ENCODE measurements at regions of chr15 and their contacts with region 1.

Region 1: DNA sequence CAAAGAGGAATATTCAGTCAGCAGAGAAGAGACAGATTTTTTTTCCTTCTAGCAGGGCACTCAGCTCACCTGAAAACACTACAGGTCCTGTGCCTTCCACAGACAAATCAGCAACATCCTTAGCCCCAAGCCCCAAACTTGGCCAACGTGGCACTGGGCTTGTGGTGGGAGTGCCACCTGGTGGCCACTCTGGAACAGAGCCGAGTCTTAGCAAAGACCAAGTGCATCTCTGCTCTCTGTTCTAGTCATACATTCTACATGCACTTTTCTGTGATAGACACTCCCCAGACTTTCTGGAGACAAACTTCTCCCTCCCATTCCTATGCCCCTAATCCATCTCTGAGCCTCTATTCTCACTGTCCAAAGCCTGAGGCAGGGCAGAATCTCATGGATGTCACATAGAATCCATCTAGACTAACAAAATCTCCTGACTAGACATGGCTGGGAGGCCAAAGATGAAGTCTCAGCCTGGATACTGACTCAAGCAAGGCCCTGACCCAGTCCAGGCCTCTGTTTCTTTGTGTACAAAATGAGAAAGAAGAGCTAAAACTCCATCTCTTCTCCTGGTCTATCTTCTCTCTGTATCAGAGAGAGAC is 5.1 kb upstream of the SEMA7A start:
- DNase-seq: peak; percentile 54
- ATAC-seq: peak; percentile 85
- H3K4me3 ChIP-seq: no peak overlapping the region
- H3K27ac ChIP-seq: no peak overlapping the region
- H3K4me1 ChIP-seq: peaks cover 8% of the 10 kb centered on the region
- H3K27me3 ChIP-seq: no peaks in the 10 kb centered on the region
- CTCF ChIP-seq: peak; percentile 95

Region 2: GRCh38 chr15:74373731-74374647 is 64.8 kb before region 1 on chr15:
- CTCF ChIA-PET with region 1: interaction called, 9 read pairs
- POLR2A ChIA-PET with region 1: no interaction called
- in situ Hi-C with region 1: no loop called
- intact Hi-C with region 1: loop called (anchors 2 kb)
- DNase-seq: no peak
- ATAC-seq: peak; percentile 95
- H3K4me3 ChIP-seq: peak overlapping the region; percentile 62 to 67
- H3K27ac ChIP-seq: peak overlapping the region; percentile 60; the same call in 1 of the 2 replicates
- H3K4me1 ChIP-seq: peaks cover 9% of the 10 kb centered on the region
- H3K27me3 ChIP-seq: no peaks in the 10 kb centered on the region; the same call in 1 of the 2 replicates
- CTCF ChIP-seq: peak; percentile 92

Region 3: DNA sequence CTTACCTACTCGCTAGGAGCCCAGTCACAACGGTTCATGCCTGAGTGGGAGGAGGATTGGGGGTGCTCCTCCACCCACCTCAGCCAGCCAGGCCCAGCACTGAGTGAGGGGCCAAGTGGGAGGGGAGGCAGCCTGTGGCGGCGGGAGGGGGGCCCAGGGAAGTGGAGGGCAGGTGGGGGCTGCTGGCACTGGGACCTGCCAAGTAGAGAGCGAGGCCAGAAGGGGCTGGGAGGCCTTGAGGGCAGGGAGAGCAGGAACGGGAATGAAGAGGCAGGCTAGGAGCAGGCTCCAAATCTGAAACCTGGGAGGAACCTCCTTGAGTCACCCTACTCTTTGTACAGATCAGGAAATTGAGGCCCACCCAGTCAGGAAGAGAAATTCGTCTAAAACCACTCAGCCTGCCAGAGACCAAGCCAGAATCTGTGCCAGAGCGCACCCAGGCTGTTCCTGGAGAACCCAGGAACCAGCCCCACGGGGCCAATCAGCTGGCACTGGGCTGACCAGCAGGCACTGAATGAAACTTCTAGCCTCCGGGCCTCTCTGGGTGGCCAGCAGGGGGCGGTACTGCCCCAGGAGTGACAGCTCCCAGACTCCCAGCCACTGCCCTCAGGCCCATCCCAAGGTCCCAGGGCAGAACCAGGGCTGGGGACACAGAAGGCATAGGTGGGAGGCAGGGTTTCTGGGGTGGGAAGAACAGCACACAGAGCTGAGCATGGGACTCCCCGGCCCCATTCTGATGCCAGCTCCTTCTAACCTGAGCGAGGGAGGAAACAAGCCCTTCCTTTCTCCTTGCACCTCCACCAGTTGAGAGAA is 56.6 kb before region 1 on chr15:
- CTCF ChIA-PET with region 1: interaction called, 8 read pairs
- POLR2A ChIA-PET with region 1: interaction called, 4 read pairs
- in situ Hi-C with region 1: no loop called
- intact Hi-C with region 1: loop called (anchors 1 kb)
- DNase-seq: no peak
- ATAC-seq: peak; percentile 95
- H3K4me3 ChIP-seq: no peak overlapping the region
- H3K27ac ChIP-seq: peak overlapping the region; percentile 12; the same call in 1 of the 2 replicates
- H3K4me1 ChIP-seq: peaks cover 32% of the 10 kb centered on the region
- H3K27me3 ChIP-seq: no peaks in the 10 kb centered on the region
- CTCF ChIP-seq: peak; percentile 95

Region 4: DNA sequence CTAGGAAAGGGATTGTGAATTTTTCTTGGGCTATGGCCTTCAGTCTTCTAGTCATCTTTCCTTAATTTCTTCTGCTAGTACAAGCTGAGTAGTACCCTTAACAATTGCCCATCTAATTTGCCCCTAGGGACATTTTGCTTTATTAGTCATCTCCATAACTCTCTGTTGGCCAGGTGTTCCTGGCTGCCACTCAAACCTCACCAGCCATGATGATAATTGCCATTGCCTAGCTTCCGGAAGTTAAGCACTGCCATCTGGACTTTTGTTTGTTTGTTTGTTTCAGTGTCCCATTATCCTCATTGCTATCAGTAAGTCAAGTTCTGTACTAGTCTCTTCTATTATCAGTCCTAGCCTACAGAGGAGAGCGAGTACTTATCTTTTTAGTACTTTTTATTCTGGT is 58.8 kb after region 1 on chr15:
- CTCF ChIA-PET with region 1: no interaction called
- POLR2A ChIA-PET with region 1: interaction called, 10 read pairs
- in situ Hi-C with region 1: no loop called
- intact Hi-C with region 1: no loop called
- DNase-seq: no peak
- ATAC-seq: peak; percentile 74
- H3K4me3 ChIP-seq: no peak overlapping the region
- H3K27ac ChIP-seq: no peak overlapping the region
- H3K4me1 ChIP-seq: no peaks in the 10 kb centered on the region
- H3K27me3 ChIP-seq: no peaks in the 10 kb centered on the region
- CTCF ChIP-seq: no peak

Region 5: DNA sequence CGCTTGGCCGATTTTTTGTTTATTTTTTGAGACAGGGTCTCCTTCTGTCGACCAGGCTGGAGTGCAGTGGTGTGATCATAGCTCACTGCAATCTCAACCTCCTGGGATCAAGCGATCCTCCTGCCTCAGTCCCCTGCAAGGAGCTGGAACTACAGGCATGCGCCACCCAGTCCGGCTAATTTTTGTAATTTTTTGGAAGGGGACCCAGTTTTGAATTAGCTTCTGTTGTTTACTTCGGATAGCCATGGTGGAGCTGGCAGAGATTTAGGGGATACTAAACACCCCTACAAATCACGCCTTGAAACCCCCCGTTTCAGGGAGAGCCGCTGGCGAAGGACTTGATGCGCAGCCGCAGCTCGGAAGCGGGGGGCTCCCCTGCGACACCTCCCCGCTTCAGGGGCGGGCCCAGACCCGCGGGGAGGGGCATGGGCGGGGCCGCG is 175.5 kb after region 1 on chr15:
- CTCF ChIA-PET with region 1: no interaction called
- POLR2A ChIA-PET with region 1: no interaction called
- in situ Hi-C with region 1: no loop called
- intact Hi-C with region 1: no loop called
- DNase-seq: no peak
- ATAC-seq: no peak
- H3K4me3 ChIP-seq: peak overlapping the region; percentile 90 to 100
- H3K27ac ChIP-seq: peak overlapping the region; percentile 65
- H3K4me1 ChIP-seq: peaks cover 11% of the 10 kb centered on the region
- H3K27me3 ChIP-seq: no peaks in the 10 kb centered on the region
- CTCF ChIP-seq: no peak

Region 6: GRCh38 chr15:74873036-74873755 is 434.4 kb after region 1 on chr15 and contains the start of gene SCAMP2:
- CTCF ChIA-PET with region 1: interaction called, 10 read pairs
- POLR2A ChIA-PET with region 1: no interaction called
- in situ Hi-C with region 1: no loop called
- intact Hi-C with region 1: no loop called
- DNase-seq: peak; percentile 81
- ATAC-seq: peak; percentile 99
- H3K4me3 ChIP-seq: peak within 1 kb of the TSS; percentile 85 to 98
- H3K27ac ChIP-seq: peak within 1 kb of the TSS; percentile 88
- H3K4me1 ChIP-seq: peaks cover 14% of the 10 kb centered on the region
- H3K27me3 ChIP-seq: no peaks in the 10 kb centered on the region
- CTCF ChIP-seq: no peak
- total RNA-seq, gene SCAMP2: 121 TPM

Measured in Panc1 (cell line).